ENCODE measurements at regions of chr11 and their contacts with region 1.

Region 1: DNA sequence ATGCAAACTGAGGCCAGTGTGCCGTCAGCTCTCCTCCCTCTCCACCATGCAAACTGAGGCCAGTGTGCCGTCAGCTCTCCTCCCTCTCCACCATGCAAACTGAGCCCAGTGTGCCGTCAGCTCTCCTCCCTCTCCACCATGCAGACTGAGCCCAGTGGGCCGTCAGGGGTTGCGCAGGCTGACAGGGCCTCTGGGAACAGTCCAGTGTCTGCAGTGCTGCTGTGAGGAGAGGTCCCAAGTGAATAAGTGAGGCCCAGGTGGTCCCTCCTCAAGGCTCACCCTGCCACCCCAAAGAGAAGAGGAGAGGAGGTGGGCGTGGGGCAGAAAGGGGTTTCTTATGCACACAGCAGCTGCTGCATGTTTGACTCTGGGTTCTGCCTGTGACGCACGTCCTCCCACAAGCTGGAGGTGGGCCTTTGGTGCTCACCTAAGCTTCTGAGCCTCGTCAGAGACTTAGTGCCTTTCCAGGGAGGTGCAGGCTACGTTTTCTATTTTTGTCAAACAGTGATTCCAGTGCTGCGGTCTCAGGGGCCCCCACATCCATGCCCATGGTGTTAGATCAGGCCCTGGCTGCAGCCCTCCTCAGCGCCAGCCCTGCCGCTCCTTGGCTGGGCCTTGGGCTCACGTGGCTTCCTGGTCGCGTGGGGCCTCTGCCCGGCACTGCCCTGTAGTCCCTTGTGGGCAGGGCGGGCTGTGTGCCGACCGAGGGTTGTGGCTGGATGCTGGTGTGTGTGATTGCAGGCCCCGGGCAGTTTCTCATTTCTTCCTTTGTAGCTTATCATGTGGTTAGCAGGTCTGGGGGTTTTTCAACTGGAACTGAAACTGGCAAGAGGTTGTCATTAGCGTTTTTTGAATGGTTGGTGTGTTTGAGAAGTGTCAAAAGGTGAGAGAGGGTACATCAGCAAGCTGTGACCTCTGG is 7.1 kb downstream of the TPCN2 start:
- DNase-seq: peak; percentile 94
- ATAC-seq: peak; percentile 85
- H3K4me3 ChIP-seq: peak overlapping the region; percentile 43; the same call in 1 of the 2 replicates
- H3K27ac ChIP-seq: peak overlapping the region; percentile 92
- H3K4me1 ChIP-seq: peaks cover 50% of the 10 kb centered on the region
- H3K27me3 ChIP-seq: no peaks in the 10 kb centered on the region
- CTCF ChIP-seq: no peak
- EP300 ChIP-seq: peak; percentile 85 to 87
- POLR2A ChIP-seq: peak; percentile 47; the same call in 1 of the 2 replicates
- RAD21 ChIP-seq: no peak

Region 2: GRCh38 chr11:69044111-69045013 is 11.5 kb before region 1 on chr11:
- CTCF ChIA-PET with region 1: interaction called, 11 read pairs
- POLR2A ChIA-PET with region 1: interaction called, 5 read pairs
- RAD21 ChIA-PET with region 1: interaction called, 7 read pairs
- SMC1A ChIA-PET with region 1: interaction called, 10 read pairs
- in situ Hi-C with region 1: no loop called
- intact Hi-C with region 1: no loop called
- DNase-seq: no peak
- ATAC-seq: peak; percentile 55
- H3K4me3 ChIP-seq: no peak overlapping the region
- H3K27ac ChIP-seq: no peak overlapping the region
- H3K4me1 ChIP-seq: peaks cover 3% of the 10 kb centered on the region; the same call in 1 of the 2 replicates
- H3K27me3 ChIP-seq: no peaks in the 10 kb centered on the region
- CTCF ChIP-seq: peak; percentile 37 to 69 (median 60); a peak in 4 of 6 replicates
- EP300 ChIP-seq: no peak
- POLR2A ChIP-seq: no peak
- RAD21 ChIP-seq: peak; percentile 21; the same call in 1 of the 2 replicates

Region 3: GRCh38 chr11:69567951-69568808 is 512.3 kb after region 1 on chr11:
- CTCF ChIA-PET with region 1: no interaction called
- POLR2A ChIA-PET with region 1: no interaction called
- RAD21 ChIA-PET with region 1: no interaction called
- SMC1A ChIA-PET with region 1: no interaction called
- in situ Hi-C with region 1: no loop called
- intact Hi-C with region 1: no loop called
- DNase-seq: no peak
- ATAC-seq: no peak
- H3K4me3 ChIP-seq: no peak overlapping the region
- H3K27ac ChIP-seq: no peak overlapping the region
- H3K4me1 ChIP-seq: no peaks in the 10 kb centered on the region
- H3K27me3 ChIP-seq: peaks cover 0 to 2% of the 10 kb centered on the region in 2 experiments; a peak in 1 of 4 replicates
- CTCF ChIP-seq: no peak
- EP300 ChIP-seq: no peak
- POLR2A ChIP-seq: no peak
- RAD21 ChIP-seq: no peak